ENCODE measurements at regions of chr22 and their contacts with region 1.

Region 1: GRCh38 chr22:37807410-37808293 is at the start of gene GCAT:
- DNase-seq: peak; percentile 89 to 96 (median 94)
- H3K4me3 ChIP-seq: peak within 1 kb of the TSS; percentile 44 to 91 (median 75)
- H3K27ac ChIP-seq: peak within 1 kb of the TSS in 37 of 59 donors; percentile 13 to 94 (median 55)
- H3K27me3 ChIP-seq: no peaks in the 10 kb centered on the region
- CTCF ChIP-seq: peak in 7 of 56 donors; percentile 12 to 31 (median 25)
- total RNA-seq, gene GCAT: 19.4 to 39.6 (median 27.9) TPM

Region 2: DNA sequence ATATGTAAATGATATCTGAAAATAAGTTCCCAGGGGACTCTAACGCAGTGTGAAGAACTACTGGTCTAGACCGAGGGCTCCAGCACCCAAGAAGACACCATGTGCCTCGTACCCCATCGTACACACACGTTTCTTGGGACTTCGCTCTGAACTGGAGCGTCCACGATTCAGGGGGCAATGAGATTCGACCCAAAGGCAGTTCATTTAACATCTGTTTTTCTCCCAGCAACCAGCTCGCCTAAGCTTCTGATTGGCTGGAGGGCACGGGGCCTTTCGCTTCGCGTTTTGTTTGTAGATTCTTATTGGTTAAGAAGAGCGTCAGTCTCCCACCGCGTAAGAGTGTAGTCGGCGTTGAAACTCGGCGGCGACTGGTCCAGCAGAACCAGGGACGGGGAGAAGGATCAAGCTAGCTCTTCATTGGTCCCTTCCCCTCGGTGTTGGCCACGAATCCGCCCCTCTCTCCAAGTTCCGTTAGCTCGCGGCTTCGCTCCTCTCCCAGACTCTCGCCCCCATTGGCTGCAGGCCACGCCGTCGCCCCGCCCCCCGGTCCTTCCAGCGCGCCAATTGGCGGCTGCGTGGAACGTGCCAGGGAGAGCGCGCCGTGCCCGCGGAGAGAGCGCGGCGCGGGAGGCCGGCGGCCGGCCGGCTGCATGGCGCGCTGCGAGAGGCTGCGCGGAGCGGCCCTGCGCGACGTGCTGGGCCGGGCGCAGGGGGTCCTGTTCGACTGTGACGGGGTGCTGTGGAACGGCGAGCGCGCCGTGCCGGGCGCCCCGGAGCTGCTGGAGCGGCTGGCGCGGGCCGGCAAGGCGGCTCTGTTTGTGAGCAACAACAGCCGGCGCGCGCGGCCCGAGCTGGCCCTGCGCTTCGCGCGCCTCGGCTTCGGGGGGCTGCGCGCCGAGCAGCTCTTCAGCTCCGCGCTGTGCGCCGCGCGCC is 149.3 kb before region 1 on chr22 and contains the start of gene PDXP:
- intact Hi-C with region 1: loop called in 1 of 2 experiments (anchors 10 kb)
- DNase-seq: peak; percentile 91 to 99 (median 98)
- H3K4me3 ChIP-seq: peak within 1 kb of the TSS; percentile 49 to 82 (median 71)
- H3K27ac ChIP-seq: peak within 1 kb of the TSS in 56 of 59 donors; percentile 20 to 92 (median 79)
- H3K27me3 ChIP-seq: no peaks in the 10 kb centered on the region
- CTCF ChIP-seq: peak in 10 of 56 donors; percentile 7 to 50 (median 23)
- total RNA-seq, gene PDXP: 62.4 to 280 (median 189) TPM

Region 3: DNA sequence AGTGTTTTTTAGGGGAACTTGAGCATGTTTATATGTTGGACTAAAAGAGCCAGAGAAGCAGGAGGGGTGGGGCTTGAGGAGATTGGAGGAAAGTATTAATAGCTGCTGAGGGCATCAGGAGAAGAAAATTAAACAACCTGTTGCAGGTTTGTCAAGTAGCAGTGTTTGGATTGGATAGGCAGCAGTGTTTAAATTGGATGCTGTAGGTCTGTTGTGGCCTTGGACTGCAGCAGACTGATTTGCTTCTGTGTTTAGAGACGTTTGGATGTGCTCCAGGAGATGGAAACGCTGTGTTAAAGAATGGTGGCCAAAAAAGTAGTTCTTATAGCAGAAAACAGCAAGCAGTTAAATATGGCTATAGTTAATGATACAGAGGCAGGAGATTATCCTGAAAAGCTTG is 47.3 kb after region 1 on chr22:
- intact Hi-C with region 1: loop called in 1 of 2 experiments (anchors 5 kb)
- DNase-seq: no peak
- H3K4me3 ChIP-seq: no peak overlapping the region
- H3K27ac ChIP-seq: peak overlapping the region in 1 of 59 donors; percentile 18
- H3K27me3 ChIP-seq: no peaks in the 10 kb centered on the region
- CTCF ChIP-seq: no peak